ENCODE measurements at regions of chr13 and their contacts with region 1.

Region 1: DNA sequence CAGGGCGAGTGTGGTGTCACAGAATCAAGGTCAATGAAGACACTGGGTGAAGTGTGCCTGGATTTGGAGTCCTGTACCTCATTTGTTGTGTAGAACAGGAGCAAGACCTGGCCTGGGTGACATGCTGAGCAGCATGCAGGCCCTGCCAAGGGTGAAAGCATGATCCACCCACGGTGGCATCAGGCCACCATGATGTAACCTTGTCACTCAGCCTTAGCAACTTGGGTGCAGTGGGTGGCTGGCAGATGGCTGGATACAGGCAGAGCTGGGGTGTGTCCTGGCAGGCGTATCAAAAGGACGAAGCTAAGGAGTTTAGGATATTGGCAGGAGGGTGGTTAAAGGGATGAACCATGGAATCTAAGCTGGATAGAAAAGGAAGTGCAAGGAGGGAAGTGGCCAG is 10.3 kb downstream of the THSD1 start:
- DNase-seq: no peak
- H3K4me3 Mint-ChIP-seq: no peak overlapping the region
- H3K27ac Mint-ChIP-seq: no peak overlapping the region
- H3K4me1 Mint-ChIP-seq: no peaks in the 10 kb centered on the region
- H3K27me3 Mint-ChIP-seq: peaks cover 8% of the 10 kb centered on the region

Region 2: DNA sequence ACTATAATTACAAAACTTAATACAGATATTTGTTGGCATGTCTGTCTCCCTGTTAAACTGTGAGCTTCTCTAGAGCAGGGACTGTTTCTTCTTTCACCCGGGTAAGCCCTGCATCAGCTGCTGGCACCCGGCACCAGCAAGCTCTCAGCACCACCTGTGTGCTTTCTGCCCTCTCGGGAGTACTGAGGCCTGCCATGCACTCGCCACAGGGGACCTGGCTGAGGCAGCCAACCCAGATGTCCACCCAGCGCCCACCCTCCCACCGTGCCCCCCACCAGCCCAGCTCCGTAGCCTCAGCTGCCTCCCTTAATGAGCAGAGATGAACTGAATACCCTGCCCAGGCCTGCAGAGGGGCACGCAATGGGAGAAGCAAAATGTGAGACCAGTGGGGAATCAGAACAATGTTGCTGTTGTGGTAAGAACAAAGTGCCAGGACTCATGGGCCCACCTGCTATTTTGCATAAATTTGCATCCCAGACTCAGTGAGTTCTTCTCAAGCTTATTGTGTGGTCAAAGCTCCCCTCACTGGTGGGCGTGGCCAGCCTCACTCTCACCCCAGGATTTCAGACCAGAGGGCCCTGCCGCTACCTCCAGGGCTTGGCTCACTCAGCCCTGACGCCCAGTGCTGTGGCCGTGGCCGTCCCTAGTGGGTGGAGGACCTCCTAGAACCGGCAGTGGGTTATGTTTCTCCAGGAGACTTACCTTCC is 1070.8 kb before region 1 on chr13:
- intact Hi-C with region 1: no loop called
- DNase-seq: no peak
- H3K4me3 Mint-ChIP-seq: no peak overlapping the region
- H3K27ac Mint-ChIP-seq: no peak overlapping the region
- H3K4me1 Mint-ChIP-seq: no peaks in the 10 kb centered on the region
- H3K27me3 Mint-ChIP-seq: no peaks in the 10 kb centered on the region

Region 3: GRCh38 chr13:52383366-52383765 is 12.3 kb before region 1 on chr13:
- intact Hi-C with region 1: loop called (anchors 1 kb)
- DNase-seq: no peak
- H3K4me3 Mint-ChIP-seq: no peak overlapping the region
- H3K27ac Mint-ChIP-seq: no peak overlapping the region
- H3K4me1 Mint-ChIP-seq: no peaks in the 10 kb centered on the region
- H3K27me3 Mint-ChIP-seq: no peaks in the 10 kb centered on the region

Region 4: GRCh38 chr13:53327680-53328315 is 932.1 kb after region 1 on chr13:
- intact Hi-C with region 1: no loop called
- DNase-seq: no peak
- H3K4me3 Mint-ChIP-seq: no peak overlapping the region
- H3K27ac Mint-ChIP-seq: no peak overlapping the region
- H3K4me1 Mint-ChIP-seq: no peaks in the 10 kb centered on the region
- H3K27me3 Mint-ChIP-seq: no peaks in the 10 kb centered on the region